GM13976 (cell line): ENCODE measurements at regions of chr2 and their contacts with region 1.

Region 1: DNA sequence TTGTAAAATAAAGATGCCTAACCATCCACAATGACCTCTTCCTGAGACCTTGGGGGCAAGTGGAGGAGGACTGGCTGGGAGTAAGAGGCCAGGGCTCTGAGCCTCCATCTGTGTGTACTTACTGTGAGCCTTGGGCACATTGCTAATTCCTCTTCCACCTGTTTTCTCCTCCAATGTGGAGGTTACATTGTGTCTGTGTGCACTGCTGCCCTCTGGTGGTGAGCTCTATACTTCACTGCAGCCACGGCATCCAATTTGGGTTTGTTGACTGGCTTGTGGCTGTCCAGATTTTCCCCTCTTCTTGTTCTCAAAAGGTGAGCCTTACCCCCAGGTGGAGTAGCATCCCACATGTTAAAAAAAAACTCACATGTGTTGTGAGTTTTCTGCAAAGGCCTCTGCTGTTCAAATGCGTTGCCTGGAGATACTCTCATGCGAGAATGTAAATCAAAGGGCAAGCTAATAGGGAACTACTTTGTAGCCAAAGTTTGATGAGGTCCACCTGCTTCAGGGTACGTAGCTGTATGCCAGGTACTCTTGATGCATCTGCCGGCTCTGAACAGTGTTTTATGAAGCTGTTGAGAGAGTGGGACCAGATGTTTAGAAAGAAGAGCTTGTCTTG is 80.8 kb downstream of the APOB start:
- DNase-seq: peak; percentile 70
- CTCF ChIP-seq: peak; percentile 80

Region 2: GRCh38 chr2:20625491-20626391 is 337.3 kb before region 1 on chr2:
- in situ Hi-C with region 1: no loop called
- DNase-seq: no peak
- CTCF ChIP-seq: no peak

Region 3: DNA sequence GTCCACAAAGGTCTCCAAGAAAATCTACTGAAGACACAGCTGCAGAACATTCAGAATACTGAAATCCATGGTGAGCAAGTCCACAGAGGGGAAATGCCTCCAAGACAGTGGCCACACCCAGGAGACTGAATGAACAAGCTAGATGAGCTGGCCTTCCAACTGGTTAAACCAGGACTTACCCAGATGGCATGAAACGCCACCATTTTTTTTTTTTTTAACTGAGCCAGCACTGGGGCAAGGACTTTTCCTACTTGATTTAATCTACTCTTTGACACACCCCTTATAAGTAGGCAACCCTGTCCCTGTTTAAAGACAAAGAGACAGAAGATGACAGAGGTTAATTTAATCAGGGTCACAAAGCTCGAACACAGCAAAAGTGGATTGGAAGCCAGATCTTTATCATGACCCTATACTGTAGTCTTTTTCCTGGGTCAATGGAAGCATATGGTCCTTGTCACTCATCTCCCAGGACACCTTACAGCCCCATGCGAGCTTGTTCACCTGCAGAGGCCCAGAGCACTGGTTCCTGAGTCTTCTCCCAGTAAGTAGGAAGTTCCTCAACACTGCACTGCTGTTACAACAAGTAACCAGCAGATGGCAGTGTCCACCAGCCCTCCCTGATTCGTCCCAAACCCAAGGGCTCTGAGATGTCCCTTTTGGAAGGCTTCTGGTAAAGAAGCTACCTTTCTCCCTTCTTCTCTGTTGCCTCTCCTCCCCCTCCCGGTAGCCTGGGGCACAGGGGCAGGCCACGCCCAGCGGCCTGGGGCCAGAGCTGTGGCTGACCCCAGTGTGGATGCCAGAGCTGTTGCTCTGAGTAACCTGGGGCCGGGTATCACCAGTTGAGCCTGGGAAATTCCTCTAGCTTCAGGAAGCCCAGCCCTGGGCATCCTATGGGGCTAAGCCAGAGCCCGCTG is 301.7 kb before region 1 on chr2:
- in situ Hi-C with region 1: loop called (anchors 10 kb)
- DNase-seq: peak; percentile 84
- CTCF ChIP-seq: peak; percentile 93